Left cardiac atrium (tissue), 4 donors: ENCODE measurements at regions of chr4 and their contacts with region 1.

Region 1: DNA sequence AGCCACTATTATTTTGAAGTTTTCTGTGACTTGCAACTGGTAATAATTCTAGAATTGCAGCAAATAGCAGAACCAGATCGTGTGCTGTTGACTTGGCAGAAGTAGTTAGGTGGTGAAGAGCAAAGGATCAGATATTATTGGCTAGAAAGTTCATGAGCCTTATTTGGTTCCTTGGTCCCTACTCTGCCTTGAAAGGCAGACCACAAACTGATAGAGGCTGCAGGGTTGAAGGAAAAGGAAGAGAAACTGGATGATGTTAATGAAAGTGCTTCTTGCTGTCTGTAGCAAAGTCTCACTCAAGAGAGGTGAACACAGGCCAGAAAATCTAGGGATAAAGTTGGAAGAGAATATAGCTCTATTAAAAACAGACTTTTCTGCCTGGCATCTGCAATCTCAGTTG is 41.2 kb upstream of the RNF150 start:
- DNase-seq: no peak
- ATAC-seq: no peak

Region 2: DNA sequence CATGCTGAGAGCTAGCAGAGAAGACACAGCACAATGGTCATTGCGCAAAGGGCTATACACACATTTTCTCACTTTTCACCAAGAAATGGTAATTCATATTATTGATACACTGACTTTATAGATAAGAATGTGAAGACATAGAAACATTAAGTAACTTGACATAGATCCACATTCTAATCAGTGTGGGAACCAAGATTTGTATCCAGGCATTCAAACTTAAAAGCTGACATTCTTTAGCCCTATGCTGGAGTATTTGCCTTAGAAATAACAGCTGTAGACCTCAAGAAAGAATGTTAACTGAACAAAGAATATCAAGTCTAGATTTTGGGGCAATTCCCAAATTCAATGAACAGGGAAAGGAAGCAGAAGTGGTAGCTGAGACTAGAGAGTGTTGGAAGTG is 846.7 kb after region 1 on chr4:
- intact Hi-C with region 1: loop called in 1 of 2 experiments (anchors 5 kb)
- DNase-seq: no peak
- ATAC-seq: no peak